MCF 10A (cell line): ENCODE measurements at regions of chr10 and their contacts with region 1.

Region 1: GRCh38 chr10:114304017-114304570 is 65.0 kb downstream of the VWA2 start:
- DNase-seq: peak; percentile 84
- H3K4me3 Mint-ChIP-seq: no peak overlapping the region
- H3K27ac Mint-ChIP-seq: no peak overlapping the region
- H3K4me1 Mint-ChIP-seq: peaks cover 20% of the 10 kb centered on the region
- H3K27me3 Mint-ChIP-seq: no peaks in the 10 kb centered on the region
- CTCF ChIP-seq: peak; percentile 79

Region 2: GRCh38 chr10:114173921-114174694 is 130.0 kb before region 1 on chr10 and contains the start of gene CCDC186:
- CTCF ChIA-PET with region 1: interaction called, 3 read pairs
- POLR2A ChIA-PET with region 1: interaction called, 4 read pairs
- intact Hi-C with region 1: loop called (anchors 1 kb)
- DNase-seq: peak; percentile 96
- H3K4me3 Mint-ChIP-seq: peak within 1 kb of the TSS; percentile 97
- H3K27ac Mint-ChIP-seq: peak within 1 kb of the TSS; percentile 99
- H3K4me1 Mint-ChIP-seq: peaks cover 6% of the 10 kb centered on the region
- H3K27me3 Mint-ChIP-seq: no peaks in the 10 kb centered on the region
- CTCF ChIP-seq: no peak
- total RNA-seq, gene CCDC186: 20.6 and 20.9 TPM in 2 replicates

Region 3: DNA sequence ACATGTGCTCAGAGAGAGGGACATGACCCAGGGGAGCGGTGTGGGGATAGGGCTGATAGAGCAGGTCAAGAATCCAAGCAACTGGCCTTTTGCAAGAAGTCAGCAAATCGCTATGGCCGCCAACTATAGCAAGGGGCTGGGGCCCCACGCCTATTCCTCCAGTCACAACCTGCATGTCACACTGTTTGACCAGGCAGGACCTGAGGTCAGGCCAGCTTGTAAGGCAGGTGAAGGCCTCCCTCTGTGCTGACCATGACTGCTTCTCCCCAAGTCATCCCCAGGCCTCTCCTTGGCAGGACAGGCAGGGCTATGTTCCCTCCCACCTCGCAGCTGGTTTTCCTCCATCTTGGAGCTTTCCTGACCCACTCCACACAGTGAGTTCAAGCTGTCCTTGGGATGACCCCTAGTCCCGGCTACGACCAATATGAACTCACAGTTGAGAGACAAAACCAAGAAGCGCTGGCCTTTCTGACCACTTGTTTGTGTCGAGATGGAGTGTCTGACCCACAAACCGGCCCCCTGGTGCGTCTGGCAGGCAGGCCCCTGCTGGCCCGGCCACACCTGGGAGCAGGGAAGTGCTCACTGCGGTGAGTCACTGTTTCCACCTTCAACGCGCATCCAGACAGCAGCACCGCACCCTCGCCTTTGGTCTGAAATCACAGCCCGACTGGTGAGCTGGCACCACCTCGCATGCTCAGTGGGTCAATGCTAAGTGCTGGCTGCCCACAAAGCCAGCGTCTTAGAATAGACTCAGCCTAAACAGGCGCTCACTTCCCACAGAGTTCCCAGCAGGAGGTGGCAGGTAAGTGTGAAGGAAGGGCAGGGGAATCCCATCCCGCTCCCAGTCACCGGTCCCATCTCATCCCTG is 16.4 kb after region 1 on chr10:
- CTCF ChIA-PET with region 1: interaction called, 11 read pairs
- POLR2A ChIA-PET with region 1: interaction called, 7 read pairs
- intact Hi-C with region 1: no loop called
- DNase-seq: peak; percentile 95
- H3K4me3 Mint-ChIP-seq: peak overlapping the region; percentile 31
- H3K27ac Mint-ChIP-seq: peak overlapping the region; percentile 97
- H3K4me1 Mint-ChIP-seq: peaks cover 35% of the 10 kb centered on the region
- H3K27me3 Mint-ChIP-seq: no peaks in the 10 kb centered on the region
- CTCF ChIP-seq: no peak

Region 4: DNA sequence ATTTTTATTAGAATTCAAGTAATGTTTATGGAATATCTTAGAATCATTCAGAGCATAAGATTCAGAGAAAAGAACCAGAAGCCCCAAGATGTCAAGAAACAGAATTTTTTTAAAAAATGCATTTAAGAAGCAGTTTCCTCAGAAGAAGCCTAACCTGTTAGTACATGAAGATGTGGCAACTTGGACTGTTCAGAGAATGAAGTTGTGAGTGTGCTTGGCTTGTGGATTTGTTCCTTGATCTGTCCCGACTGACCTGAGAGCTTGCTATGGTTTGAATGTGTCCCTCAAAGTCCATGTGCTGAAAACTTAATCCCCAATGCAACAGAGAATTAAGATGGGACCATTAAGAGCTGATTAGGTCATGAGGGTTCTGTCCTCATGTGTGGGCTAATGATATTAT is 114.0 kb after region 1 on chr10:
- CTCF ChIA-PET with region 1: interaction called, 12 read pairs
- POLR2A ChIA-PET with region 1: no interaction called
- intact Hi-C with region 1: no loop called
- DNase-seq: no peak
- H3K4me3 Mint-ChIP-seq: no peak overlapping the region
- H3K27ac Mint-ChIP-seq: no peak overlapping the region
- H3K4me1 Mint-ChIP-seq: peaks cover 19% of the 10 kb centered on the region
- H3K27me3 Mint-ChIP-seq: no peaks in the 10 kb centered on the region
- CTCF ChIP-seq: no peak

Region 5: GRCh38 chr10:114470956-114471905 is 167.1 kb after region 1 on chr10:
- CTCF ChIA-PET with region 1: interaction called, 11 read pairs
- POLR2A ChIA-PET with region 1: no interaction called
- intact Hi-C with region 1: no loop called
- DNase-seq: peak; percentile 75
- H3K4me3 Mint-ChIP-seq: no peak overlapping the region
- H3K27ac Mint-ChIP-seq: no peak overlapping the region
- H3K4me1 Mint-ChIP-seq: peaks cover 6% of the 10 kb centered on the region
- H3K27me3 Mint-ChIP-seq: no peaks in the 10 kb centered on the region
- CTCF ChIP-seq: peak; percentile 80

Region 6: DNA sequence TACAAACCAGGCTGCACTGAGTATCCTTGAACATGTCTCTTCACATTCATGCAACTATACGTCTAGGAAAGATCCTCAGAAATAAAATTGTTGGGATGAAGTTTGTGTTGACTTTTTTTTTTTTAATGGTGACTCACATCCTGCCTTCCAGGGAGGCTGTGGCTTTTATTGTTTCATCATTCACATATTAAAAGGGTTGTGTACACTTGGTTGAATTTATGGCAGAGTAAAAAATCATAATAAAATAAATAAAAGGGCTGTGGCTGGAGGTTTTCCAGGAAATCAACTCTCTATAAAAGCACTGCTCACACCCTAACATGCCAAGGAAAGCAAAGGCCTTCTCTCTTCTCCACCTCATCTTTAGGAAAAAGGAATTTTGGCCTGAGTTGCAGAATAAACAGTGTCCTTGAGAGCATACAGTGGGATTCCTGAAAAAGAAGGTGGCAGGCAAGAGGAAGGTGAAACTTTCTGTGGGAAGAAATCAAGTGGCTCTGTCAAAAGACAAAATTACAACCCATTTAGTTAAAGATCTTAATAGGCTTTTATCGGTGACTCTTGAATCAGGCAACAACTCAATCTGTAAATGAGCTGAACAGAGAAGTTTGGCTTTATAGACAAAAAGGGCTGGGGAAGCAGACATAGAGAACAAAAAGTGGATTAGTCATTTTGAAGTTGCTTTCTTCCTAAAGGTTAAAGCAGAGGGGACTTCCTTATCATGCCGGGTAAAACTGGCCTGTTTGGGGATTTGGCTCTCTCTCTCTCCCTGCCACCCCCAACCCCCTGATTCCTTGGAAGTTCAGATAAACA is 475.9 kb after region 1 on chr10:
- CTCF ChIA-PET with region 1: no interaction called
- POLR2A ChIA-PET with region 1: no interaction called
- intact Hi-C with region 1: loop called (anchors 5 kb)
- DNase-seq: peak; percentile 94
- H3K4me3 Mint-ChIP-seq: no peak overlapping the region
- H3K27ac Mint-ChIP-seq: peak overlapping the region; percentile 74
- H3K4me1 Mint-ChIP-seq: peaks cover 27% of the 10 kb centered on the region
- H3K27me3 Mint-ChIP-seq: no peaks in the 10 kb centered on the region
- CTCF ChIP-seq: no peak